Activated T-helper 1 cell treated with anti-CD3 and anti-CD28 coated beads, Interleukin-12 subunit alpha, Interleukin-12 subunit beta, Interleukin-2, Interleukin-4 antibody, amounts not matched to agents 30 ng/mL and 10 ng/mL and 1 ng/mL, durations not matched to agents 14 hours and 24 hours and 36 hours (primary cell): ENCODE measurements at regions of chr22 and their contacts with region 1.

Region 1: DNA sequence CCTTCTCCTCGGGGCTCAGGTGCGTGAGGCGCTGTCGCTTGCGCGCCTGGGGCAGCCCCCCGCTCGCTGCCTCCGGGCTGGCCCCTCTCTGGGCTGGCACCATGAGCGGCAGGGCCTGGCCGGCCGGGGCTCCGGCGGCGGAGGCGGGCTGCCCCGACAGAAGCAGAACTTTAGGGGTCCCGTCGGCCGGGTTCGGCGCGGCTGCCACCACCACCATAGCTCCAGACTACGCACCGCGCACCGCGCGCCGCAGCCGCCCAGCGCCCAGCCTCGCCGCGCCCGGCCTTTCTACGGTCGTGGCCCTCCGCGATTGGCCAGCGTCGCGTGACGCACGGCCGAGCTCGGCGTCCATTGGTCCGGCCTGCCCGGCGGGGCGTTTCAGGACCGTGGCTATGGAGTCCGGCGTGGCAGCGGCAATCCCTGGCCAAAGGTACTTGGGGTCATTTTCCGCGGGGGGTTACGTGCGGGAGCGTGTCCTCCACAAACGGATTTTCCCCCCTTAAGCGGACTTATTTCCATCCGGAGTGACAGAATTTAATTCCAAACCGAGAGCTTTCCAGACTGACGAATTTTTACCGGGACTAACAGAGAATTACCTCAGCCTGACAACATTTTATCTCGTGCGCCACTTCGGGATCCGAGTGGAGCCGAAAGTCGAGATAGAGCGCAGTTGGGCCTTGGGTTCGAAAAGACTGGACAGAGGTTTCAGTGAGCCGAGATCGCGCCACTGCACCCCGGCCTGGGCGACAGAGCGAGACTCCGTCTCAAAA is at the start of gene XBP1:
- DNase-seq: peak; percentile 92
- H3K4me3 Mint-ChIP-seq: peak within 1 kb of the TSS; percentile 96
- H3K27ac Mint-ChIP-seq: peak within 1 kb of the TSS; percentile 98
- H3K4me1 Mint-ChIP-seq: peaks cover 48% of the 10 kb centered on the region
- H3K27me3 Mint-ChIP-seq: peaks cover 2% of the 10 kb centered on the region
- total RNA-seq, gene XBP1: 177 and 181 TPM in 2 replicates

Region 2: GRCh38 chr22:28410050-28410816 is 390.3 kb before region 1 on chr22:
- intact Hi-C with region 1: loop called (anchors 10 kb)
- DNase-seq: no peak
- H3K4me3 Mint-ChIP-seq: no peak overlapping the region
- H3K27ac Mint-ChIP-seq: no peak overlapping the region
- H3K4me1 Mint-ChIP-seq: peaks cover 10% of the 10 kb centered on the region
- H3K27me3 Mint-ChIP-seq: no peaks in the 10 kb centered on the region

Region 3: DNA sequence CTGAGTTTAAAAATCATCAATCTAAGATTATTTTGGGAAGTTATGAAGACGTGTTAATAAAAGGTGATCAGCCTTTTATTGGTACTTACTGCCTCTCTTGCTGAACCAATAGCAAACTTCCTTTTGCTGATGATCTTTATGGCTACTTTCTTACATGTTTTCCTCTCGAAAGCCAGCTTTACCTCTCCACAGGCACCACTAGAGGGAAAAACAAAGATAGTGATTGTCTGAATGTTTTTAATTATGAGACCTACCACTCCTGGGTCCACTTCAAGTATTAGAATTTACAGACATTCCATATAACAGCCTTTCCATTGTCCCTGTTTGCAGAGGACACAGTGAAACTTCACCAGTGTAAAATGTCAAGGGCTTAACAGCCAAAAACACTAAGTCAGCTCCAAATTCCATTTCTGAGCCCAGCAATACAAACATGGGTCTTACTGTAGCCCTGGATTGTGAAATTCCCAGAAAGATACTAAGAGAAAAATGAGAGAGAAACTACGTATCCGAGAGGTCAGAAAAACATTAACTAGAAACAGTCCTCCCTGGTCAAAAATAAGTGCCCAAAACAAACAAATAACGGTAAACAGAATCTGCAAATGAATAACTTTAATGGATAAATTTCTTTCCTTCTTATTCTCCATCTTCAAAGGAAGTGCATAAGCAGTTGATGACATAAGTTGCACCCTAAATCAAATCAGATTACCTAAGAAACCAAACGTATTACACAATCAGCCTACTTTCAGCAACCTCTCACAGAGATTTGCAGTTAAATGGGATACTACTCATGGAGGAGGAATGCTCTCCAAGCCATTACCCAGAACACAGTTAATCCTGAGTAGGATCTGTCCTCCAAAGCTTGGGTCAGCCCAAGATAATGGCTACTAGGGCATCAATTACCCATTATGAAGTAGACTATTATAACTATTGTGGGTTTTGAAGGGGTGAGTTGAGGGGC is 88.4 kb before region 1 on chr22:
- intact Hi-C with region 1: no loop called
- DNase-seq: no peak
- H3K4me3 Mint-ChIP-seq: no peak overlapping the region
- H3K27ac Mint-ChIP-seq: no peak overlapping the region
- H3K4me1 Mint-ChIP-seq: peaks cover 37% of the 10 kb centered on the region
- H3K27me3 Mint-ChIP-seq: no peaks in the 10 kb centered on the region

Region 4: GRCh38 chr22:28741758-28742561 is 58.5 kb before region 1 on chr22 and contains the starts of genes CHEK2 and HSCB:
- intact Hi-C with region 1: loop called (anchors 1 kb)
- DNase-seq: peak; percentile 97
- H3K4me3 Mint-ChIP-seq: peak within 1 kb of the TSS; percentile 86
- H3K27ac Mint-ChIP-seq: peak within 1 kb of the TSS; percentile 70
- H3K4me1 Mint-ChIP-seq: peaks cover 42% of the 10 kb centered on the region
- H3K27me3 Mint-ChIP-seq: no peaks in the 10 kb centered on the region
- total RNA-seq, gene CHEK2: 31.4 and 35.0 TPM in 2 replicates
- total RNA-seq, gene HSCB: 16.6 and 18.0 TPM in 2 replicates

Region 5: GRCh38 chr22:28810821-28811491 is 10.5 kb after region 1 on chr22:
- intact Hi-C with region 1: loop called (anchors 1 kb)
- DNase-seq: peak; percentile 60
- H3K4me3 Mint-ChIP-seq: peak overlapping the region; percentile 76
- H3K27ac Mint-ChIP-seq: peak overlapping the region; percentile 89
- H3K4me1 Mint-ChIP-seq: peaks cover 81% of the 10 kb centered on the region
- H3K27me3 Mint-ChIP-seq: no peaks in the 10 kb centered on the region

Region 6: DNA sequence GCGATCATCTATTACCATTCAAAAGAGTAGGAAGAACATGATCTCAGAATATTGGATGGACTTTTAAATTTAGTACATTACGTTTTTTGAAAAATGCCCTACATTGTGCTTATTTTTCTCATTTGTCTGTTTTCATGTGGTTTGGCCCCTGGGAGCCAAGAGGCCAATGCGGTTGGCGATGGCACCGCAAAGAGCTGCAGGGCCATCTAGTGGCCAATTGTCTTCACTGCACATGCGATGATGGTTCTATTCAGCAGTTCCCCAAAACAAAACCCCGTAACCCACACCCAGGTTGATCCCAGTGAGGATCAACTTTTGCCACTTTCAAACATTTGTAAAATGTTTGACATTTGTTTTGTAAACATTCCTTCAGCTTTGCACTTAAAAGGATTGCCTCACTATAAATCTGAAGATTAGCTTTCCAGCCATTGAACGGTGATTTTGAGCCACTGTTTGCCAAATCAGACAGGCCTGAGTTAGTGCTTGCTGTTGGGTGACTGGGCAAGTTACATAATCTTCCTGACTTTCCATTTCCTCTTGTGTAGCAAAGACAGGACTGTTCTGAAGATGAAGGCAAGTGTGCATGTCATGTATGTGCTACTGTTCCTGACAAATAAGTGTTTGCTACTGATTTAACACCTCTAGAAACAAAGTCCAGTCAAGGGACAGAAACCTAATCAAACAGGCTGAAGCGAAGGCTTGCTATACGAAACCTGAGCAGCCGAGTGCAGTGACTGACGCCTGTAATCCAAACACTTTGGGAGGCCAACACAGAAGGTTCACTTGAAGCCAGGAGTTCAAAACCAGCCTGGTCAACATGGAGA is 29.1 kb after region 1 on chr22:
- intact Hi-C with region 1: loop called (anchors 1 kb)
- DNase-seq: peak; percentile 71
- H3K4me3 Mint-ChIP-seq: no peak overlapping the region
- H3K27ac Mint-ChIP-seq: no peak overlapping the region
- H3K4me1 Mint-ChIP-seq: peaks cover 32% of the 10 kb centered on the region
- H3K27me3 Mint-ChIP-seq: no peaks in the 10 kb centered on the region

Region 7: GRCh38 chr22:28907311-28908008 is 107.0 kb after region 1 on chr22:
- intact Hi-C with region 1: loop called (anchors 1 kb)
- DNase-seq: peak; percentile 3
- H3K4me3 Mint-ChIP-seq: peak overlapping the region; percentile 4
- H3K27ac Mint-ChIP-seq: peak overlapping the region; percentile 55
- H3K4me1 Mint-ChIP-seq: peaks cover 24% of the 10 kb centered on the region
- H3K27me3 Mint-ChIP-seq: peaks cover 71% of the 10 kb centered on the region